ENCODE measurements at regions of chr1 and their contacts with region 1.

Region 1: GRCh38 chr1:226547754-226548191 is 791 bp upstream of the STUM start:
- DNase-seq: peak; percentile 76
- ATAC-seq: peak; percentile 87
- H3K4me3 ChIP-seq: no peak overlapping the region
- H3K27ac ChIP-seq: no peak overlapping the region
- H3K4me1 ChIP-seq: peaks cover 31% of the 10 kb centered on the region
- H3K27me3 ChIP-seq: peaks cover 7 to 42% of the 10 kb centered on the region in 2 experiments
- CTCF ChIP-seq: peak; percentile 91
- EP300 ChIP-seq: no peak
- POLR2A ChIP-seq: no peak
- RAD21 ChIP-seq: peak; percentile 67

Region 2: GRCh38 chr1:226424228-226425003 is 123.4 kb before region 1 on chr1:
- CTCF ChIA-PET with region 1: no interaction called
- POLR2A ChIA-PET with region 1: no interaction called
- in situ Hi-C with region 1: loop called (anchors 10 kb)
- intact Hi-C with region 1: loop called (anchors 10 kb)
- DNase-seq: no peak
- ATAC-seq: peak; percentile 88
- H3K4me3 ChIP-seq: no peak overlapping the region
- H3K27ac ChIP-seq: no peak overlapping the region
- H3K4me1 ChIP-seq: no peaks in the 10 kb centered on the region
- H3K27me3 ChIP-seq: peaks cover 2 to 3% of the 10 kb centered on the region in 2 experiments; a peak in 1 of 5 replicates
- CTCF ChIP-seq: peak; percentile 75
- EP300 ChIP-seq: no peak
- POLR2A ChIP-seq: no peak
- RAD21 ChIP-seq: no peak

Region 3: GRCh38 chr1:226482975-226483700 is 64.6 kb before region 1 on chr1:
- CTCF ChIA-PET with region 1: no interaction called
- POLR2A ChIA-PET with region 1: no interaction called
- in situ Hi-C with region 1: loop called (anchors 10 kb)
- intact Hi-C with region 1: no loop called
- DNase-seq: no peak
- ATAC-seq: no peak
- H3K4me3 ChIP-seq: no peak overlapping the region
- H3K27ac ChIP-seq: no peak overlapping the region
- H3K4me1 ChIP-seq: peaks cover 36% of the 10 kb centered on the region
- H3K27me3 ChIP-seq: peaks cover 7 to 47% of the 10 kb centered on the region in 2 experiments; a peak in 4 of 5 replicates
- CTCF ChIP-seq: no peak
- EP300 ChIP-seq: no peak
- POLR2A ChIP-seq: no peak
- RAD21 ChIP-seq: no peak

Region 4: GRCh38 chr1:226569879-226570547 is 22.2 kb after region 1 on chr1:
- CTCF ChIA-PET with region 1: no interaction called
- POLR2A ChIA-PET with region 1: no interaction called
- in situ Hi-C with region 1: no loop called
- intact Hi-C with region 1: loop called (anchors 1 kb)
- DNase-seq: peak; percentile 16
- ATAC-seq: peak; percentile 96
- H3K4me3 ChIP-seq: no peak overlapping the region
- H3K27ac ChIP-seq: no peak overlapping the region
- H3K4me1 ChIP-seq: no peaks in the 10 kb centered on the region
- H3K27me3 ChIP-seq: peaks cover 0 to 1% of the 10 kb centered on the region in 2 experiments; a peak in 3 of 5 replicates
- CTCF ChIP-seq: peak; percentile 21; the same call in 1 of the 2 replicates
- EP300 ChIP-seq: no peak
- POLR2A ChIP-seq: no peak
- RAD21 ChIP-seq: no peak

Region 5: DNA sequence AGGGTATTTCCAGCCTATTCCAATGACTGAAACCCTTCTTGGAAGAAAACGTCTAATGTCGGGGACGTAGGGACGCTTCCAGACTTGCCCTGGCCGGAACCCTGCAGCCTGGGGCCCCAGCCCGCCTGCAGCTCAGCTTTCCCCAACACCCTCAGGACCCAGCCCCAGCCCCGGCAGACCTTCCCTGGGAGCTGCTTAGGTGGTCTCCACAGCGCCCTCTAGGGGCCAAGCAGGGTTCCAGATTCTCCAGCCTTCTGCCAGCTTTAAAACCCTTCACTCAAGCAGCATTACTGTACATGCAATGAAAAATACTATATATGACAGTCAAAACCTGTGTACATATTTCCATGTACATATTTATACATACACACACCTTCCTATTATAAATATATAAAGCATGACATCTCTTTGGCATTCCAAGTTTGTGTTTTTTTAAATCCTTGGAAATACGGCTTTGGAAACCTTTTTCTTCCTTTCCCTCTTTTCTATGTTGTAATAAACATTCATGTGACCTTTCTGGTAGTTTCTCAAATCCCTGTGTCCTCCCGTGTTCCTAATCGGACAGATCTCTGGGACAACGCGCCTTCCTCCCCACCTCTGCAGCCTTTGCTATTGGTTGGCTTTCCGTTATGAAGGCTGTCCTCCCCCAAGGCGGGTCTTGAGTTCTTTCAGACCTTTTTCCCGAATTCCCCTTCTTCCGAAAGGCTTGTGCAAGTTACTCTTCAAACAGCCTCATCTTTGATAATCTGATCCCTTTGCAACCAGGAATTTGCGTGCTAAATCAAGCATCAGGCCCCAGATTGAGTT is 61.1 kb after region 1 on chr1:
- CTCF ChIA-PET with region 1: interaction called, 7 read pairs
- POLR2A ChIA-PET with region 1: no interaction called
- in situ Hi-C with region 1: no loop called
- intact Hi-C with region 1: loop called (anchors 2 kb)
- DNase-seq: peak; percentile 54
- ATAC-seq: peak; percentile 87
- H3K4me3 ChIP-seq: no peak overlapping the region
- H3K27ac ChIP-seq: no peak overlapping the region
- H3K4me1 ChIP-seq: no peaks in the 10 kb centered on the region
- H3K27me3 ChIP-seq: peaks cover 2 to 20% of the 10 kb centered on the region in 2 experiments; a peak in 3 of 5 replicates
- CTCF ChIP-seq: peak; percentile 80
- EP300 ChIP-seq: no peak
- POLR2A ChIP-seq: no peak
- RAD21 ChIP-seq: peak; percentile 48; the same call in 1 of the 2 replicates

Region 6: DNA sequence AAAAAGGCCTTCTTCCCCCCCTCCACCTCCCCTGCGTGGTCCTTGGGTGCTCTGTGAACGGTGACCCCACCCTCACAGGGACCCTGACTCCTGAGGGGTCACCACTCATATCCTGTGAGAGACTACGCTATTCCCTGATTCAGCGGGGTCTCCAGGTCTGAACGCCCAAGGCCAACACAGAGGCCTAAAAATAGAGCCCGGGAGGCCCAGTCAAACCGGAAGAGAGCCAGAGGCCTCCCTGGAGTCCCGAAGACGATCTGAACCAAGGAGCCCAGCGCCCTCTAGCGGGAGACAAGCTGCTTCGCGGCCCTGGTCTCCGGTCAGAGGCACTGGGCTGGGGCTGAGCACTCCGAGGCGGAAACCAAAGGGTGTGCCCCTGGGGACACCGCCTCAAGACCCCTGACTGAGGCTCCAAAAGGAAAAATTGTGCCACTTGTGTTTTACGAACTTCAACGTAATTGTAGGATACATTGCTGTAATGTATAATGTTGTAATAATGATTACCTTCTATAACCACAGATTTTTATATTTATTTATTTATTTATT is 280.3 kb after region 1 on chr1:
- CTCF ChIA-PET with region 1: no interaction called
- POLR2A ChIA-PET with region 1: no interaction called
- in situ Hi-C with region 1: no loop called
- intact Hi-C with region 1: loop called (anchors 2 kb)
- DNase-seq: peak; percentile 64
- ATAC-seq: peak; percentile 97
- H3K4me3 ChIP-seq: no peak overlapping the region
- H3K27ac ChIP-seq: no peak overlapping the region
- H3K4me1 ChIP-seq: no peaks in the 10 kb centered on the region
- H3K27me3 ChIP-seq: peaks cover 2 to 39% of the 10 kb centered on the region in 2 experiments; a peak in 2 of 5 replicates
- CTCF ChIP-seq: peak; percentile 87
- EP300 ChIP-seq: no peak
- POLR2A ChIP-seq: no peak
- RAD21 ChIP-seq: peak; percentile 85